Astrocyte of the cerebellum (primary cell): ENCODE measurements at regions of chr3 and their contacts with region 1.

Region 1: GRCh38 chr3:18687286-18687685 is 262.1 kb upstream of the SATB1 start:
- DNase-seq: no peak
- H3K4me3 ChIP-seq: no peak overlapping the region
- CTCF ChIP-seq: no peak

Region 2: GRCh38 chr3:18740631-18741583 is 53.6 kb after region 1 on chr3:
- in situ Hi-C with region 1: loop called (anchors 5 kb)
- DNase-seq: no peak
- H3K4me3 ChIP-seq: no peak overlapping the region
- CTCF ChIP-seq: no peak